ENCODE measurements at regions of chr11 and their contacts with region 1.

Region 1: GRCh38 chr11:31641477-31642062 is 132.0 kb downstream of the ELP4 start:
- DNase-seq: peak; percentile 41
- H3K4me3 ChIP-seq: no peak overlapping the region
- H3K27ac ChIP-seq: no peak overlapping the region
- H3K4me1 ChIP-seq: peaks cover 7% of the 10 kb centered on the region
- H3K27me3 ChIP-seq: no peaks in the 10 kb centered on the region
- CTCF ChIP-seq: peak; percentile 56 to 59
- POLR2A ChIP-seq: no peak

Region 2: DNA sequence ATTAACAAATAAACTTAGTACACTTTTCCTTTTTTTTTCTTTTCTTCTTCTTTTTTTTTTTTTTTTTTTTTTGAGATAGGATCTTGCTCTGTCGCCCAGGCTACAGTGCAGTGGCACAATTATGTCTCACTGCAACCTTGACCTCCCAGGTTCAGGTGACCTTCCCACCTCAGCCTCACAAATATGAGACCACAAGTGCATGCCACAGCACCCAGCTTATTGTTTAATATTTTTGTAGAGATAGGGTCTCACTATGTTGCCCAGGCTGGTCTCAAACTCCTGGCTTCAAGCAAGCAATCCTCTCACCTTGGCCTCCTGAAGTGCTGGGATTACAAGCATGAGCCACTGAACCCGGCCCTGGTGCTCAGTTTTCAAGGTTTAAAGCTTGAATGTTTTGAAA is 43.1 kb before region 1 on chr11:
- CTCF ChIA-PET with region 1: interaction called, 11 read pairs
- POLR2A ChIA-PET with region 1: no interaction called
- dilution Hi-C with region 1: no loop called
- intact Hi-C with region 1: no loop called
- DNase-seq: no peak
- H3K4me3 ChIP-seq: no peak overlapping the region
- H3K27ac ChIP-seq: no peak overlapping the region
- H3K4me1 ChIP-seq: no peaks in the 10 kb centered on the region
- H3K27me3 ChIP-seq: no peaks in the 10 kb centered on the region
- CTCF ChIP-seq: no peak
- POLR2A ChIP-seq: no peak

Region 3: DNA sequence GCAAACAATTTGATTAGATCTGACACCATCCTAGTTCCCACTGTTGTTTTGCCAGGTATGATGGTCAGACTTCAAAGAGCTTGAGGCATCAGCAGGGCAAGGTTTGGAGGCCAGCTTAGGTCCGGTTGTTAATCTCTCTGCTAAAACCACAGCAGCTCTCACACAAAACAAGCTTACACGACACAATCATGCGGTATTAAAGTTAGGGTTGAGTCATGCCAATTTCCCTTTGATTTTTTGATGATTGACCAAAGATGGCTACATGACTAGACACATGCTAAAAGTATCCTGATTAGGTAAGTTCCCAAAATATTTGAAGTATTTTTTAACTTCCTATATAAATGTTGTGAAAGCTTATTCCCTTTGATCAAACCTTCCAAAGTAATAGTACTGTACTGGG is 13.9 kb after region 1 on chr11:
- CTCF ChIA-PET with region 1: interaction called, 31 read pairs
- POLR2A ChIA-PET with region 1: no interaction called
- dilution Hi-C with region 1: no loop called
- intact Hi-C with region 1: loop called (anchors 2 kb)
- DNase-seq: no peak
- H3K4me3 ChIP-seq: no peak overlapping the region
- H3K27ac ChIP-seq: no peak overlapping the region
- H3K4me1 ChIP-seq: no peaks in the 10 kb centered on the region
- H3K27me3 ChIP-seq: no peaks in the 10 kb centered on the region
- CTCF ChIP-seq: no peak
- POLR2A ChIP-seq: no peak

Region 4: DNA sequence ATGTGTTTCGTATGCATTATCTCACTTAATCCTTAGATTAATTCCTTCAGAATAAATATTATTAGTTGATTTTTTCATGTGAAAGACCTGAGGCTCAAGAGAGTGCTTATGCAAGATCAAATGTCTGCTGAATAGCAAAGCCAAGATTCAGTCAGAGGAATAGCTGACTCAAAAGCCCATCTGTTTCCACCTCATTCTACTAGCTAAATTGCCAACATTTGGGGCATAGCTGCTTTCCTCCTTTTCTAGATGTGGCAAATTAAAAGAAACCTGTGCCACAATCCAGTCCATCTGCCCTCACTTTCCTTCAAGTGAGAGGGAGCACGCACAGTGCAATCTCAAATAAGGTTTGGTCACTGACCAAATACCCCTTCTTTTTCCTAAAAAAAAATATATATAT is 48.5 kb after region 1 on chr11:
- CTCF ChIA-PET with region 1: interaction called, 18 read pairs
- POLR2A ChIA-PET with region 1: no interaction called
- dilution Hi-C with region 1: no loop called
- intact Hi-C with region 1: no loop called
- DNase-seq: peak; percentile 5
- H3K4me3 ChIP-seq: no peak overlapping the region
- H3K27ac ChIP-seq: no peak overlapping the region
- H3K4me1 ChIP-seq: peaks cover 8% of the 10 kb centered on the region
- H3K27me3 ChIP-seq: no peaks in the 10 kb centered on the region
- CTCF ChIP-seq: no peak
- POLR2A ChIP-seq: no peak

Region 5: DNA sequence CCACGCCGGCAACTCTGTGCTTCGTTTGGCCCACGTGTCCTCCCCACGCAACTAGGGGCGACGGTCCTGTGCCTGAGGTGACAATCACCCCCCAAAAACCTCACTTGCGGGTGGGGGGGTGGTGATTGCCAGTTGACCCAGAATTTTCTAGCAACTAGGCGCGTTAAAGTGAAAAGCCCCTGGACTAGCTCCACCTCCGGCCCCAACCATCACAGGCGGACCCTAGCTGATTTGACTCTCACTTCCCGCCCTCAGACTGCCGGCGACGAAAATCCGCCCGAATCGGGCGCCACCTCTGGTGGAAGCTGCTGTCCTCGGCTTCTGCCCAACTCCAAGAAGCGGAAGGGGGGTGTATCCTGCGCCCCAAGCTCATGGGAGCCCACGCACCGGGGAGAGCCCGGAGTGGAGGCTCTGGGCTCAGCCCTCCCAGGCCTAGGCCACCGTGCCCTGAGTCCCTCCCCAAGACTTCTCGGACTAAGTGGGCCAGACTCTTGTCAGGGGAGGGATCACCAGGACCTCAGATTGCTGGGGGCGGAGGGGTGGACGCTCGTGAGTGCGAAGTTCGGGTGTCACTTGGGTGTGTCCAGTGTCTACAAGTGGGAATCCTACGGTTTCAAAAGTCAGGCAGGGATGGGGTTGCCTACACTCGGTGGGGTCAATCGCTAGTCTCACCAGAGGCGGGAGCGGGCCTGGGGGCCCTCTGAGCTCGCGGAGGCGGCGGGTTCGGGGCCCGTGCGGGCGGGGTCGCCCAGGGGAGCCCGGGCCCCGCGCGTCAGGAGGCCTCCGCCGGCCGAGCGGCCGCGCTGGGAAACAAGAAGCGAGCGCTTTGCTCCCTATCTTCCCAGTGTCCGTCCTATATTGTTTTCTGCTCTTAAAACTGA is 157.2 kb after region 1 on chr11:
- CTCF ChIA-PET with region 1: interaction called, 12 read pairs
- POLR2A ChIA-PET with region 1: no interaction called
- dilution Hi-C with region 1: no loop called
- intact Hi-C with region 1: loop called (anchors 5 kb)
- DNase-seq: no peak
- H3K4me3 ChIP-seq: no peak overlapping the region
- H3K27ac ChIP-seq: no peak overlapping the region
- H3K4me1 ChIP-seq: peaks cover 5% of the 10 kb centered on the region
- H3K27me3 ChIP-seq: peaks cover 88 to 95% of the 10 kb centered on the region in 2 experiments
- CTCF ChIP-seq: peak in 1 of 2 donors; percentile 26
- POLR2A ChIP-seq: no peak

Region 6: GRCh38 chr11:31958076-31958735 is 316.6 kb after region 1 on chr11:
- CTCF ChIA-PET with region 1: interaction called, 44 read pairs
- POLR2A ChIA-PET with region 1: no interaction called
- dilution Hi-C with region 1: no loop called
- intact Hi-C with region 1: loop called (anchors 10 kb)
- DNase-seq: peak; percentile 44
- H3K4me3 ChIP-seq: no peak overlapping the region
- H3K27ac ChIP-seq: no peak overlapping the region
- H3K4me1 ChIP-seq: no peaks in the 10 kb centered on the region
- H3K27me3 ChIP-seq: no peaks in the 10 kb centered on the region
- CTCF ChIP-seq: peak; percentile 83 to 90
- POLR2A ChIP-seq: no peak

Measured in endothelial cell of umbilical vein (primary cell).